ENCODE measurements at regions of chr1 and their contacts with region 1.

Region 1: DNA sequence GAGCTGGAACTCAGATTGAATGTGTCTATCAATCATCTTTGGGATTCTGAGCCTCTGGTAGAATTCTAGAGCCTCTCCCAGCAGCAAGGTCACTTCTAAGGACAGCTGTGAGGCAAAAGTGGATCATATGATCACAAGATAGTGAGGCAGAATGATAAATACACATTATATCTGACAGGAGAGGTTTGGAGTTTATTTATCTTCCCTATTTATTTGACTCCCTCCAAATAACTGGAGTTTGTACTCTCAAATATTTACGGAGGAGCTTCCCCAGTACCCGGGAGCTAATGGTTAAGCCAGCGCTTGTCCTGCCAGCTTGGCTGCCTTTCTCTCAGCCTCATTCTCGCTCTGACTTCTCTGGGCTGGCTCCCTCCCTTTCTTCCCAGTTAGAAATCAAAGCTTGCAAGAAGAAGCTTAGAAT is 2.3 kb downstream of the HMGCS2 start:
- DNase-seq: peak; percentile 65 to 71
- H3K4me3 ChIP-seq: peak overlapping the region; percentile 37
- H3K4me3 Mint-ChIP-seq: peak overlapping the region; percentile 63
- H3K27ac Mint-ChIP-seq: peak overlapping the region; percentile 45
- H3K4me1 ChIP-seq: peaks cover 60% of the 10 kb centered on the region
- H3K4me1 Mint-ChIP-seq: peaks cover 24% of the 10 kb centered on the region
- H3K27me3 ChIP-seq: no peaks in the 10 kb centered on the region
- H3K27me3 Mint-ChIP-seq: no peaks in the 10 kb centered on the region
- CTCF ChIP-seq: no peak

Region 2: GRCh38 chr1:119720866-119721440 is 45.4 kb before region 1 on chr1:
- CTCF ChIA-PET with region 1: no interaction called
- POLR2A ChIA-PET with region 1: no interaction called
- intact Hi-C with region 1: no loop called
- DNase-seq: no peak
- H3K4me3 ChIP-seq: no peak overlapping the region
- H3K4me3 Mint-ChIP-seq: no peak overlapping the region
- H3K27ac Mint-ChIP-seq: no peak overlapping the region
- H3K4me1 ChIP-seq: peaks cover 14% of the 10 kb centered on the region
- H3K4me1 Mint-ChIP-seq: peaks cover 27% of the 10 kb centered on the region
- H3K27me3 ChIP-seq: no peaks in the 10 kb centered on the region
- H3K27me3 Mint-ChIP-seq: no peaks in the 10 kb centered on the region
- CTCF ChIP-seq: no peak

Region 3: GRCh38 chr1:119737040-119737682 is 29.2 kb before region 1 on chr1:
- CTCF ChIA-PET with region 1: no interaction called
- POLR2A ChIA-PET with region 1: no interaction called
- intact Hi-C with region 1: no loop called
- DNase-seq: no peak
- H3K4me3 ChIP-seq: no peak overlapping the region
- H3K4me3 Mint-ChIP-seq: no peak overlapping the region
- H3K27ac Mint-ChIP-seq: no peak overlapping the region
- H3K4me1 ChIP-seq: no peaks in the 10 kb centered on the region
- H3K4me1 Mint-ChIP-seq: no peaks in the 10 kb centered on the region
- H3K27me3 ChIP-seq: no peaks in the 10 kb centered on the region
- H3K27me3 Mint-ChIP-seq: no peaks in the 10 kb centered on the region
- CTCF ChIP-seq: no peak

Region 4: GRCh38 chr1:119790451-119791198 is 24.2 kb after region 1 on chr1:
- CTCF ChIA-PET with region 1: no interaction called
- POLR2A ChIA-PET with region 1: no interaction called
- intact Hi-C with region 1: loop called (anchors 2 kb)
- DNase-seq: no peak
- H3K4me3 ChIP-seq: no peak overlapping the region
- H3K4me3 Mint-ChIP-seq: peak overlapping the region; percentile 61
- H3K27ac Mint-ChIP-seq: peak overlapping the region; percentile 92
- H3K4me1 ChIP-seq: peaks cover 30% of the 10 kb centered on the region
- H3K4me1 Mint-ChIP-seq: peaks cover 31% of the 10 kb centered on the region
- H3K27me3 ChIP-seq: no peaks in the 10 kb centered on the region
- H3K27me3 Mint-ChIP-seq: no peaks in the 10 kb centered on the region
- CTCF ChIP-seq: no peak

Region 5: GRCh38 chr1:119816407-119816806 is 50.0 kb after region 1 on chr1:
- CTCF ChIA-PET with region 1: no interaction called
- POLR2A ChIA-PET with region 1: no interaction called
- intact Hi-C with region 1: loop called (anchors 1 kb)
- DNase-seq: peak; percentile 53 to 60
- H3K4me3 ChIP-seq: no peak overlapping the region
- H3K4me3 Mint-ChIP-seq: peak overlapping the region; percentile 40
- H3K27ac Mint-ChIP-seq: peak overlapping the region; percentile 74
- H3K4me1 ChIP-seq: peaks cover 31% of the 10 kb centered on the region
- H3K4me1 Mint-ChIP-seq: peaks cover 28% of the 10 kb centered on the region
- H3K27me3 ChIP-seq: no peaks in the 10 kb centered on the region
- H3K27me3 Mint-ChIP-seq: no peaks in the 10 kb centered on the region
- CTCF ChIP-seq: no peak

Region 6: GRCh38 chr1:119838236-119838635 is 71.9 kb after region 1 on chr1:
- CTCF ChIA-PET with region 1: no interaction called
- POLR2A ChIA-PET with region 1: no interaction called
- intact Hi-C with region 1: no loop called
- DNase-seq: no peak
- H3K4me3 ChIP-seq: no peak overlapping the region
- H3K4me3 Mint-ChIP-seq: no peak overlapping the region
- H3K27ac Mint-ChIP-seq: no peak overlapping the region
- H3K4me1 ChIP-seq: no peaks in the 10 kb centered on the region
- H3K4me1 Mint-ChIP-seq: no peaks in the 10 kb centered on the region
- H3K27me3 ChIP-seq: no peaks in the 10 kb centered on the region
- H3K27me3 Mint-ChIP-seq: no peaks in the 10 kb centered on the region
- CTCF ChIP-seq: no peak